Kidney (tissue), 22 donors: ENCODE measurements at regions of chr10 and their contacts with region 1.

Region 1: DNA sequence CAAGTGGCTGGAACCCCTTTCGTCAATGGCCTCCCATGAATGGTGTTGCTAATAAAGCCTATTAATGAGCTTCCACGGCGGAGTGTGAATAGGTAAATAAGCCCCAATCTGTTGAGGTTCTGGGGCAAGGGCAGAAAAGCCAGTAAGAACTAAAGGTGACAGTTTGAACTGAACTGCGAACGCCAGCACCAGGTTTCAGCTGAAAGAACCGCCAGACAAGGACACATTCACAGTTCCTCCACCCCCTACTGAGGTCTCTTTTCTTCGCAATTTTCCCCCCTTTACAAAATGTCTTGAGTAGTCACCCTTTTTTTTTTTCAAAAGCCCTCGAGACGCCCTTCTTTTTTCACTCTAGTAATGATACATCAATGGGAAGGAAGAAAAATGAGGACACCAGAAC is 2.4 kb upstream of the FGFR2 start:
- DNase-seq: peak in 1 of 5 donors; percentile 15
- H3K4me3 ChIP-seq: no peak overlapping the region
- H3K27ac ChIP-seq: no peak overlapping the region
- H3K4me1 ChIP-seq: peaks cover 0 to 3% (median 0%) of the 10 kb centered on the region in 3 donors
- H3K27me3 ChIP-seq: no peaks in the 10 kb centered on the region
- CTCF ChIP-seq: no peak

Region 2: GRCh38 chr10:120948889-120949608 is 651.6 kb before region 1 on chr10:
- intact Hi-C with region 1: loop called (anchors 5 kb)
- DNase-seq: peak; percentile 87 to 95 (median 89)
- H3K4me3 ChIP-seq: peak overlapping the region in 1 of 3 donors; percentile 32
- H3K27ac ChIP-seq: no peak overlapping the region
- H3K4me1 ChIP-seq: peaks cover 0 to 4% (median 3%) of the 10 kb centered on the region in 3 donors
- H3K27me3 ChIP-seq: no peaks in the 10 kb centered on the region
- CTCF ChIP-seq: peak; percentile 90